PC-9 (cell line): ENCODE measurements at regions of chr1 and their contacts with region 1.

Region 1: DNA sequence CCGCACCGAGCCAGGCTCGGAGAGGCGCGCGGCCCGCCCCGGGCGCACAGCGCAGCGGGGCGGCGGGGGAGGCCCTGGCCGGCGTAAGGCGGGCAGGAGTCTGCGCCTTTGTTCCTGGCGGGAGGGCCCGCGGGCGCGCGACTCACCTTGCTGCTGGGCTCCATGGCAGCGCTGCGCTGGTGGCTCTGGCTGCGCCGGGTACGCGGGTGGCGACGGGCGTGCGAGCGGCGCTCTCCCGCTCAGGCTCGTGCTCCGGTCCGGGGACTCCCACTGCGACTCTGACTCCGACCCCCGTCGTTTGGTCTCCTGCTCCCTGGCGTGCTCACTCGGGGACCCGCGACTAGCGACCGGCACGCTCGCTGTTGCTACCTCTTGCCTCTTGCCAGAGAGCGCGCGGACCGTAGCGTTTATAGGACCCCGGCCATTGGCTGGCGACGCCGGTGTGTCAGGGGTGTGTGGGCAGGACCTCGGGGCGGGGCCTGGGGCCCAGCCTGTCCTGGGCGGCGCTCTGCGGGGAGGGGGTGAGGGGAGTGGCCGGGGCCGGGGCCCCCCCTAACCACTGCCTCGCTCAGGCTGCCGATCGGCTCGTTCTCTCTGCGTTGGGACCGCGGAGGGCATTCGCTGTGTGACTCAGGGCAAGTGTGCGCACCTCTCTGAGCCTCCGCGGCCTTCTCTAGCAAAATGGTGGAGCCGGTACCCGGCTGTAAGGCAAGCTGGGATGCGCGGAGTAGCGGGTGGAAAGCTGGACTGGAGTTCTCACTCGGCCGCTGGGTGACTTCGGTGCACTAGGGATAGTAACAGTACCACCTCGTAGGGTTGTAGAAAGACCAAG is at the start of gene SLC2A1:
- DNase-seq: peak; percentile 81 to 97
- H3K4me3 ChIP-seq: peak within 1 kb of the TSS; percentile 98
- H3K27ac ChIP-seq: peak within 1 kb of the TSS; percentile 76
- H3K4me1 ChIP-seq: peaks cover 61% of the 10 kb centered on the region
- H3K27me3 ChIP-seq: no peaks in the 10 kb centered on the region
- CTCF ChIP-seq: no peak
- total RNA-seq, gene SLC2A1: 327 and 337 TPM in 2 replicates

Region 2: GRCh38 chr1:42886800-42887199 is 71.9 kb before region 1 on chr1:
- CTCF ChIA-PET with region 1: no interaction called
- POLR2A ChIA-PET with region 1: no interaction called
- intact Hi-C with region 1: no loop called
- DNase-seq: no peak
- H3K4me3 ChIP-seq: no peak overlapping the region
- H3K27ac ChIP-seq: no peak overlapping the region
- H3K4me1 ChIP-seq: no peaks in the 10 kb centered on the region
- H3K27me3 ChIP-seq: no peaks in the 10 kb centered on the region
- CTCF ChIP-seq: no peak

Region 3: GRCh38 chr1:42924082-42924850 is 34.4 kb before region 1 on chr1:
- CTCF ChIA-PET with region 1: no interaction called
- POLR2A ChIA-PET with region 1: no interaction called
- intact Hi-C with region 1: loop called (anchors 1 kb)
- DNase-seq: peak; percentile 81 to 96
- H3K4me3 ChIP-seq: peak overlapping the region; percentile 63
- H3K27ac ChIP-seq: peak overlapping the region; percentile 57
- H3K4me1 ChIP-seq: peaks cover 20% of the 10 kb centered on the region
- H3K27me3 ChIP-seq: no peaks in the 10 kb centered on the region
- CTCF ChIP-seq: no peak

Region 4: GRCh38 chr1:42931911-42932422 is 26.7 kb before region 1 on chr1:
- CTCF ChIA-PET with region 1: interaction called, 3 read pairs
- POLR2A ChIA-PET with region 1: interaction called, 5 read pairs
- intact Hi-C with region 1: loop called (anchors 1 kb)
- DNase-seq: peak; percentile 86 to 92
- H3K4me3 ChIP-seq: no peak overlapping the region
- H3K27ac ChIP-seq: peak overlapping the region; percentile 69
- H3K4me1 ChIP-seq: peaks cover 60% of the 10 kb centered on the region
- H3K27me3 ChIP-seq: no peaks in the 10 kb centered on the region
- CTCF ChIP-seq: no peak

Region 5: DNA sequence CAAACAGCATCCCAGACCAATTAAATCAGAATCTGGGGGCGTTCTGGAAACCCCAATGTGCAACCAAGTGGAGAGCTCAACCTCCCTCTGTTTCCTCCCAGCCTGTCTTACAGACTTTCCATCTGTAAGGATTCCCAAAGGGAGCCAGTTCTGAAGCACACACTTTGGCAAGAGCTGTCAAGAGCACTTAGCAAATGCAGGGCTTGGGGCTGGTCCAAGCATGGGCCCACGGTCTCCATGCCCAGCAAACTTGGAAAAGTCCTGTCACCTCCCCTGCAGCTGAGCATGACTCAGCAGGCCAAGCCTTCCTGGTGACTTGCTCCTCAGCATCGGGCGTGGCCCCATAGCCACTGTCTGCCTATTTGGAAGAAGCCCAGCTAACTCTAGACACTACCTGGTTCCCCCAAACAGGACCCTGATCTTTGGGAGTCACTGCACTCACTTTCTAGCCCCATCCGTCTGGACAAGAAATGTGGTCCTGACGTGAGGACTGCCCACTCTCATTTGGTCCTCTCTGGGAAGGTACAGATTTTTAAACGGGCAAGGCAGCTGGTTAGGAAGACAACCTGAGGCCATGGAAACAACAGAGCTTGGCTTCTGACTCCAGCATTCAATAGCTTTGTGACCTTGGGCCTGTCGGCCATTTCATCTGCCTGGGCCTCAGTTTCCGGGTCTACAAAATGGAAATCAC is 16.9 kb before region 1 on chr1:
- CTCF ChIA-PET with region 1: interaction called, 12 read pairs
- POLR2A ChIA-PET with region 1: interaction called, 36 read pairs
- intact Hi-C with region 1: loop called (anchors 1 kb)
- DNase-seq: peak; percentile 92 to 93
- H3K4me3 ChIP-seq: peak overlapping the region; percentile 28; the same call in 1 of the 2 replicates
- H3K27ac ChIP-seq: peak overlapping the region; percentile 99
- H3K4me1 ChIP-seq: peaks cover 98% of the 10 kb centered on the region
- H3K27me3 ChIP-seq: no peaks in the 10 kb centered on the region
- CTCF ChIP-seq: no peak

Region 6: GRCh38 chr1:43008115-43009060 is 49.7 kb after region 1 on chr1:
- CTCF ChIA-PET with region 1: no interaction called
- POLR2A ChIA-PET with region 1: interaction called, 5 read pairs
- intact Hi-C with region 1: loop called (anchors 1 kb)
- DNase-seq: peak in 1 of 2 experiments; percentile 74
- H3K4me3 ChIP-seq: no peak overlapping the region
- H3K27ac ChIP-seq: no peak overlapping the region
- H3K4me1 ChIP-seq: peaks cover 22% of the 10 kb centered on the region
- H3K27me3 ChIP-seq: no peaks in the 10 kb centered on the region
- CTCF ChIP-seq: no peak

Region 7: DNA sequence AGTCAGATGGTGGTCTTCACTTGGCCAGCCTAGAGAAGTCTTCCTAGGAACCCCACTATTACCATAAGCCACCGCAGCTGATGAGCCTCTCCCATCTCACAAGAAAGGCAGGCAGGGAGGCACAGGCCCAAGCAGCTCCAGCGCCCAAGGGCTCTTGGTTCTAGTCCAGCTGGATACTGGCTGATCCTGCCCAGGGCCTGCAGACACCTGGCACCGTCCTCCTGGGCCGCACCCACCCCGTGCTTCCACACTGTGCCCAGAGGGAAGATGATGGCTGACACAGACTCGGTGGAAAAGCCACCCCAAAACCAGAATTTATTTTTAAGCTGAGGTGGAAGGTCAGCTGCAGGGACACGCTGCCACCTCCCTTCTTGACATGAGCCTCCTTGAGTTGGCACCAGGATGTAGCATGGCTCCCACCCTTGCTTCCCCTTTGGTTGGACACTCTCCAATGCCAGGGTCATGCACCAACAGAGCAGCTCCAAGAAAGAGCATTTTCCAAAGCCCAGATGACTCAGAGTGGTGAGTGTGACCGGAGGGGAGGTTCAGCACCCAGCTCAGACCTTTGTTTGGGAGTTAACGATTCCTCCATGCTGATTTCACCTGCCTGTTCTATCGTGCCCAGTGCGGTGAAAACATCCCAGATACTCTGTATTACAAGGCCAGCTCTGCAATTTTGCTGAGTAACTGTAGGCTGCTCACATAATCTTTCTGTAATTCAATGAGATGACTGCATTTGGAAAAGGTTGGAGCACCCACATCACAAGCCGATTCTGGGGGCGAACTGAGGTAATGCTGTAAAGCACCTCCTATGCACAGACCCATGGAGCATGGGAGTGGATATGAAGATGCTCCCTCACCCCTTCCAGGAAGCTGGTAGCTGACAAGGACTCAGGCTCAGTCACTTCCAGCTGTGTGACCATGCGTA is 63.1 kb after region 1 on chr1:
- CTCF ChIA-PET with region 1: interaction called, 4 read pairs
- POLR2A ChIA-PET with region 1: interaction called, 4 read pairs
- intact Hi-C with region 1: loop called (anchors 2 kb)
- DNase-seq: peak; percentile 62 to 85
- H3K4me3 ChIP-seq: no peak overlapping the region
- H3K27ac ChIP-seq: no peak overlapping the region
- H3K4me1 ChIP-seq: peaks cover 23% of the 10 kb centered on the region
- H3K27me3 ChIP-seq: no peaks in the 10 kb centered on the region
- CTCF ChIP-seq: no peak